A549 (cell line): ENCODE measurements at regions of chr7 and their contacts with region 1.

Region 1: DNA sequence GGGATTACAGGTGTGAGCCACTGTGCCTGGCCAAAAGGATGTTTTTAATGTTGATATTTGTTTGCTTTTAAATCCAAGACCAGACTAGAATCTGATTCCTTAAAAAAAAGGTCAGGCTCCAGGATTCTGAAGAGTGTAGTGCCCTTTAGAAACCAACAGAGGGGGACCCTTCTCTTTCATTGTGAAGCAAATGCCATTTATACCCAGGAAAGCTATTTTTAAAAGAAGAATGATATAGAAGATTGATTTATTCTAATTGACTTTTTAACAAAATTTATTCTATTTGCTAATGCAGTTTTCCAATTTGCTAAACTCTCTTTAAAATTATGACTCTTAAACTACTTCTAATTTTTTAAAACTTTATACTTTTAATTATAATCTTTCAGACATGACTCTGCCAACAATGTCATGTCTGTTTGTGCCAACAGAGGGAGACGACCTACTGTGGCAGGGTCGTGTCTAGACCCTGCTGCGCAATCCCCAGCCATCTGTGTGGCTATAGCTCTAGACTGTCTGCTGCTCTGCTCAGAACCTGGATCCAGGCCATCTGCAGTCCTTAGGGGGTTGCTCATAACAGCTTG is 201.0 kb upstream of the IMMP2L start:
- DNase-seq: peak; percentile 58 to 71
- ATAC-seq: peak; percentile 90 to 95
- H3K4me3 ChIP-seq: no peak overlapping the region
- H3K27ac ChIP-seq: no peak overlapping the region
- H3K4me1 ChIP-seq: no peaks in the 10 kb centered on the region; the same call in 2 of the 3 replicates
- CTCF ChIP-seq: peak; percentile 79
- EP300 ChIP-seq: no peak
- POLR2A ChIP-seq: no peak
- RAD21 ChIP-seq: peak; percentile 77 to 86

Region 2: DNA sequence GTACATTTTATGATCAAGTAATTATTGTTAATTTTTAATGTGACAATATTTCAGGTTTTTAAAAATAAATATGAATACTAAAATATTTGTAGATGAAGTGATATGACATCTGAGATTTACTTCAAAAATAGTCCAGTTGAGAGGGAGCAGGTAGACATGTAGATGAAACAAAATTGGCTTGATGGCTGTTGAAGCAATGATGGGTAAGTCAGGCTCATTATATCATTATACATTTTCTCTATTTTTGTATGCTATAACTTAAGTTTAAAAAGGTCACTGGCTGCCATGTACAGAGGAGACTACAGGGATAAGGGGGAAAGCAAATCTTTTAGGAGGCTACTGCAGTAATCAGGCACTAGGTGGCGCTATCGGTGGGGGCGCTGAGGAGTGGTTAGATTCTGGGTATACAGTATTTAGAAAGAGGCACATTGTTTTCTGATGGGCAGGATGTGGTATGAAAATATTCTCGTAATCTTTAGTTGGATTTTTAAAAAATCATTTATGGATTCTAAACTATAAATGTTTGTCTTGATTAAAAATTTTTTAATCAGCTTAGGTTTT is 11.2 kb before region 1 on chr7:
- CTCF ChIA-PET with region 1: interaction called, 27 read pairs
- POLR2A ChIA-PET with region 1: no interaction called
- DNase-seq: peak; percentile 52
- ATAC-seq: peak; percentile 91 to 97
- H3K4me3 ChIP-seq: no peak overlapping the region
- H3K27ac ChIP-seq: no peak overlapping the region
- H3K4me1 ChIP-seq: no peaks in the 10 kb centered on the region
- CTCF ChIP-seq: peak; percentile 84
- EP300 ChIP-seq: no peak
- POLR2A ChIP-seq: no peak
- RAD21 ChIP-seq: peak; percentile 56 to 67

Region 3: DNA sequence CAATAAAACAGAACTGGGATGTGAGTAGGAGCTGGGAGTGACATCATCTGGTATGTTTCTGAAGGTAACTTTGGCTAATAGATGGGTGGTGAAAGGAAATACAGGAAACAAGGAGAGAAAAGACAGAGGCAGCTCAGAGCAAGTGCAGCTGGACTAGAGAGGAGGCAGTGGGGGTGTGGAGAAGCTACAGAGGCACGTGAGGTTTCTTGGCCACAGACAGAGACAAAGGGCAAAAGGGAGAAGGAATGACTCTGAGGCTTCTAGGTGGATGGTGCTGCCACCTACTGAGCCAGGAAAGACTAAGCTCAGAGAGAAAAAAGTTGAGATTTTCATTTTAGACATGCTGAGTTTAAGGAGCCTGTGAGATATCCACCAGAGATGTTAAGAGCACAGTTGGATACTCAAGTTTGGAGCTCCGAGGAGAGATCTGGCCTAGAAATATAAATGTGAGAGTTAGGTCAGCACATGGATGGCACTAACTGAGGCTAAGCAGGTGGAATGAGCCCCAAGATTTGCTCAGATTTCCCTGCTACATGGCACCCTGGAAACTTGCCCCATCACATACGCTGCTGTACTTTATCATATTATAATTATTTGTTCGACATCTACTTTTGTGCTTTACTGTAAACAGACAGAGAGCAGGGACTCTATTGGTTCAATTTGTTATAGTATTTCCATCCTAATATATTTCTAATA is 92.0 kb after region 1 on chr7:
- CTCF ChIA-PET with region 1: interaction called, 23 read pairs
- POLR2A ChIA-PET with region 1: interaction called, 4 read pairs
- DNase-seq: peak; percentile 23 to 58
- ATAC-seq: peak; percentile 86 to 95
- H3K4me3 ChIP-seq: no peak overlapping the region
- H3K27ac ChIP-seq: no peak overlapping the region
- H3K4me1 ChIP-seq: peaks cover 13% of the 10 kb centered on the region; the same call in 2 of the 3 replicates
- CTCF ChIP-seq: peak; percentile 64
- EP300 ChIP-seq: no peak
- POLR2A ChIP-seq: no peak
- RAD21 ChIP-seq: peak; percentile 51 to 56

Region 4: DNA sequence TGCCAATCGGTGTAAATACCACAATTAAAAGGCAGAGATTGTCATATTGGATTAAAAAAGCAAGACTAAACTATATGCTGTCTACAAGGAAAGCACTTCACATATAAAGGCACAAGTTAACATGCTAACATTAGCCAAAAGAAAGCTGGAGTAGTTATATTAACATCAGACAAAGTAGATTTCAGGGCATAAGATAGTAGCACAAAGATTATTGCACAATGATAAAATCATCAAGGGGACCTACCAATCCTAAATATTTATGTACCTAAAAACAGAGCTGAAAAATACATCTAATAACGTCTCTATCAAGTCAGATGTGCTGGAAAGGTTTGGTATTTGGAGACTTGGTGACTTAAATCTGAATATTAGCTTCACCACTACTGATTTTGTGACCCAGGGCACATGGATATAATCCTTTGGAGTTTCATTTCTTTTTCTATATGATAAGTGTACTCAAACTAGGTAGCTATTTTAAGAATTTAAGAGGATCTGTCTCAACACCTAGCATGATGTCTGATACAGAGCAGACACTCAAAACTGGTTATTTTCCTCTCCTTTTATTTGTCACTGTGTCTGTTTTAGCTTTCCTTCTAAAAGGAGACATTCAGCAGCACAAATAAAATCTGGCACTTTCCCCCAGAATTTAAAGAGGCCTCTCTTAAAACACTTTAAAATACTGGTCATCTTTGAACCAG is 286.4 kb after region 1 on chr7:
- CTCF ChIA-PET with region 1: no interaction called
- POLR2A ChIA-PET with region 1: no interaction called
- DNase-seq: no peak
- ATAC-seq: no peak
- H3K4me3 ChIP-seq: no peak overlapping the region
- H3K27ac ChIP-seq: peak overlapping the region in 1 of 2 experiments; percentile 16; a peak in 1 of 6 replicates
- H3K4me1 ChIP-seq: peaks cover 45% of the 10 kb centered on the region
- CTCF ChIP-seq: no peak
- EP300 ChIP-seq: no peak
- POLR2A ChIP-seq: no peak
- RAD21 ChIP-seq: no peak

Region 5: DNA sequence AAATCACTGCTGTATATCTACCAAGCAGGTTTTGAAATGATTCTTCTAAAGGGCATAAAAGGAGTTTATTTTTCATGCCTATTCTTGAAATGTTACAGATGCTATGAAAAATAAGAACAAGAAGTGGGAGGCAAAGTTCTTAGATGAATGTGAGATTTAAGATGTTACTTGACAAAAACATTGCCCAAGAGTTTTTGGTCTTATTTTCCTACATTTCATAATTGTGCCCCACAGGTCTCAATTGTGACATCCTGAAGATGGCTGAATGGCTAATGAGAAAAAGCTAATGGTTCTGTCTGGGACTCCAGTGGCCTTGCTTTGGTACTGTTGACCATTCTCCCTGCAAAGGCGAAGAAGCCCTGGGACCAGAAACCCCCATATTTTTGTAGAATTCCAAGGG is 644.0 kb after region 1 on chr7:
- CTCF ChIA-PET with region 1: interaction called, 22 read pairs
- POLR2A ChIA-PET with region 1: no interaction called
- DNase-seq: no peak
- ATAC-seq: no peak
- H3K4me3 ChIP-seq: no peak overlapping the region
- H3K27ac ChIP-seq: no peak overlapping the region
- H3K4me1 ChIP-seq: no peaks in the 10 kb centered on the region
- CTCF ChIP-seq: no peak
- EP300 ChIP-seq: no peak
- POLR2A ChIP-seq: no peak
- RAD21 ChIP-seq: no peak

Region 6: DNA sequence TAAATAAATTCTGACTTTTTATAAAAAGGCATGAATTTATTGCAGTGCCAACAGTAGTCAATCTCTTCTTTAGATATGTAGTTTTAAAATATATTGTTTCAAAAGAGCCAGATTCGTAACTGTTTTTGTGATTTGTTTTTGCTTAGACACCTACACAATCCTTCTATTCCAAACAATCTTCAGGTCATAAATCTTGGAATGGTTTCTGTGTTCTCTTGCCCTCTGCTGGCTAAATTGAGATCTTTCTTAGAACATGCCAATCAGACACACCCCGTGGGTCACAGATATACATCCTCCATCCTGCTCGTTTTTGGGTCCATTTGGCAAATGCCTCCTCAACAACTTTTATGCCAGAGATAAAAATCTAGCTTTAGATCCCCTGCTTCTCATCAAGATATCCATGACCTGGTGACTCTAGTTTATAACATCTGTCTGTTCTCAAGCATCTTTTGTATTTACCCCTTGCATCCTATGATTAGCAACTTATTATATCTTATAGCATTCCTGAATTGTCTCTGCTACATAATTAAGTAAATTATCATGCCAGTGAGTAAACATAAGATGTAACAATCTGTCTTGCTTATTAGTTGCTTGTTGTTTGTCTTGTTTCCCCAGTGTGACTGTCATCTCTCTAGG is 651.7 kb after region 1 on chr7:
- CTCF ChIA-PET with region 1: interaction called, 36 read pairs
- POLR2A ChIA-PET with region 1: no interaction called
- DNase-seq: peak; percentile 61 to 68
- ATAC-seq: peak; percentile 93 to 95
- H3K4me3 ChIP-seq: no peak overlapping the region
- H3K27ac ChIP-seq: no peak overlapping the region
- H3K4me1 ChIP-seq: peaks cover 2% of the 10 kb centered on the region; the same call in 1 of the 3 replicates
- CTCF ChIP-seq: peak; percentile 84
- EP300 ChIP-seq: no peak
- POLR2A ChIP-seq: no peak
- RAD21 ChIP-seq: peak; percentile 81 to 82

Region 7: GRCh38 chr7:112422842-112423496 is 659.7 kb after region 1 on chr7:
- CTCF ChIA-PET with region 1: interaction called, 10 read pairs
- POLR2A ChIA-PET with region 1: no interaction called
- DNase-seq: peak; percentile 59 to 90
- ATAC-seq: peak; percentile 82 to 90
- H3K4me3 ChIP-seq: no peak overlapping the region
- H3K27ac ChIP-seq: peak overlapping the region; percentile 65 to 77
- H3K4me1 ChIP-seq: peaks cover 36% of the 10 kb centered on the region
- CTCF ChIP-seq: no peak
- EP300 ChIP-seq: no peak
- POLR2A ChIP-seq: no peak
- RAD21 ChIP-seq: no peak

Region 8: GRCh38 chr7:112495810-112496462 is 732.6 kb after region 1 on chr7:
- CTCF ChIA-PET with region 1: interaction called, 13 read pairs
- POLR2A ChIA-PET with region 1: no interaction called
- DNase-seq: peak; percentile 45 to 69
- ATAC-seq: peak; percentile 83 to 92
- H3K4me3 ChIP-seq: no peak overlapping the region
- H3K27ac ChIP-seq: no peak overlapping the region
- H3K4me1 ChIP-seq: no peaks in the 10 kb centered on the region
- CTCF ChIP-seq: peak; percentile 75
- EP300 ChIP-seq: no peak
- POLR2A ChIP-seq: no peak
- RAD21 ChIP-seq: peak; percentile 84 to 92